ENCODE measurements at regions of chr6 and their contacts with region 1.

Region 1: GRCh38 chr6:134938896-134939295 is 11.0 kb downstream of the ALDH8A1 start:
- DNase-seq: peak; percentile 64
- ATAC-seq: peak; percentile 79
- H3K4me3 Mint-ChIP-seq: no peak overlapping the region
- H3K27ac Mint-ChIP-seq: no peak overlapping the region
- H3K4me1 Mint-ChIP-seq: peaks cover 11% of the 10 kb centered on the region
- H3K27me3 Mint-ChIP-seq: no peaks in the 10 kb centered on the region

Region 2: GRCh38 chr6:134123666-134124208 is 815.2 kb before region 1 on chr6:
- CTCF ChIA-PET with region 1: interaction called, 22 read pairs
- DNase-seq: no peak
- ATAC-seq: peak; percentile 39
- H3K4me3 Mint-ChIP-seq: no peak overlapping the region
- H3K27ac Mint-ChIP-seq: no peak overlapping the region
- H3K4me1 Mint-ChIP-seq: no peaks in the 10 kb centered on the region
- H3K27me3 Mint-ChIP-seq: peaks cover 14% of the 10 kb centered on the region

Region 3: GRCh38 chr6:134882426-134883038 is 56.4 kb before region 1 on chr6:
- CTCF ChIA-PET with region 1: interaction called, 10 read pairs
- DNase-seq: peak; percentile 61
- ATAC-seq: no peak
- H3K4me3 Mint-ChIP-seq: no peak overlapping the region
- H3K27ac Mint-ChIP-seq: no peak overlapping the region
- H3K4me1 Mint-ChIP-seq: no peaks in the 10 kb centered on the region
- H3K27me3 Mint-ChIP-seq: peaks cover 24% of the 10 kb centered on the region

Region 4: DNA sequence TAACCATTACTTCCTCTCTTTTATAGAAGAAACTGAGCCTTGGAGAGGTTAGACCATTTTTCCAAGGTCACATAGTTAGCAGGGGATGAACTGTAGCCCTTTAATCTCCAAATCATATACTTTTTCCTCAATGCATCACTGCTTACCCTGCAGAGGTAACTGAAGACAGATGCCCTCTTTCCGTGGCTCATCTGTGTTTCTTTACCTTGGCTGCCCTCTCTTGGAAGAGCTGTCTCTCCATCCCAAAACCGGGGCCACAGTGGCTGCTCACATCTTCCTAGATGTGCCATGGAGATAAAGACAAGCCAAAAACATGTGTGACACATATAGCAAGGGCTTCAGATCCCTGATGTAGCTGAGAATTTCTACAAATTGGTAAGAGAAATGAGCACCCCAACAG is 11.6 kb after region 1 on chr6:
- CTCF ChIA-PET with region 1: interaction called, 10 read pairs
- DNase-seq: no peak
- ATAC-seq: no peak
- H3K4me3 Mint-ChIP-seq: no peak overlapping the region
- H3K27ac Mint-ChIP-seq: no peak overlapping the region
- H3K4me1 Mint-ChIP-seq: no peaks in the 10 kb centered on the region
- H3K27me3 Mint-ChIP-seq: no peaks in the 10 kb centered on the region

Region 5: GRCh38 chr6:134974370-134974769 is 35.5 kb after region 1 on chr6:
- CTCF ChIA-PET with region 1: no interaction called
- DNase-seq: no peak
- ATAC-seq: no peak
- H3K4me3 Mint-ChIP-seq: no peak overlapping the region
- H3K27ac Mint-ChIP-seq: no peak overlapping the region
- H3K4me1 Mint-ChIP-seq: peaks cover 22% of the 10 kb centered on the region
- H3K27me3 Mint-ChIP-seq: no peaks in the 10 kb centered on the region

Region 6: DNA sequence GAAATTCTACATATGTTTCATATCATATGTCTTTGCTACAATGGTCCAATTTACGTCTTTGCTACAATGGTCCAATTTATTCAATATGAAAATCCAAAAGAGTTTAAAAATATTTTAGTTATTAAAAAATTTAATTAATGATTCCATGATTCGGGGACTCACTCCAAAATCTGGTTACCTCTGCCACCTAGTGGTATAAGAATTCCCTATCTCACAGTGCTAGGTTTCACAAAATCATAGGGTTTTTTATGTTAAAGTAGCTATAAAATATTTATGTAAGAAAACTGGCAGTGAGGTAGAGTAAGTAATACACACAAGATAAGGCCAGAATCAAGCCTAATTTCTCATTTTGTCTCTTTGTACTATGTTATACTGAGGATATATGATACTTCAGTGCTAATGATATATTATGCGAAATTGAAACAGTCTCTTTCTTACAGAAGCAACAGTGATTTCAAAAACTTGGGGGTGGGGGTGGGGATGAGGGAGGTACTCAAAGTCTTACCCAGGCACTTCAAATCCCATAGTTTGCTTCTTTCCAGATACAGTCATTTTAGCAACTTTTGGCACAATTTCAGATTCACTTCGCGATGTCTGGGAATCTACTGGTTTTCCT is 63.4 kb after region 1 on chr6:
- CTCF ChIA-PET with region 1: interaction called, 14 read pairs
- DNase-seq: no peak
- ATAC-seq: peak; percentile 16
- H3K4me3 Mint-ChIP-seq: no peak overlapping the region
- H3K27ac Mint-ChIP-seq: no peak overlapping the region
- H3K4me1 Mint-ChIP-seq: peaks cover 17% of the 10 kb centered on the region
- H3K27me3 Mint-ChIP-seq: no peaks in the 10 kb centered on the region

Measured in activated CD8-positive, alpha-beta memory T cell treated with anti-CD3 and anti-CD28 coated beads, Interleukin-2, amount 10 ng/mL, durations not matched to agents 7 days and 5 days (primary cell).